K562 (cell line): ENCODE measurements at regions of chr2 and their contacts with region 1.

Region 1: GRCh38 chr2:75640621-75641121 is 5.9 kb upstream of the MRPL19 start:
- DNase-seq: peak; percentile 65 to 69 (median 66)
- ATAC-seq: peak; percentile 99
- H3K4me3 ChIP-seq: no peak overlapping the region
- H3K27ac ChIP-seq: no peak overlapping the region
- H3K4me1 ChIP-seq: no peaks in the 10 kb centered on the region
- H3K27me3 ChIP-seq: peaks cover 2 to 5% of the 10 kb centered on the region in 2 experiments; a peak in 2 of 5 replicates
- CTCF ChIP-seq: peak; percentile 94 to 98 (median 97)
- EP300 ChIP-seq: no peak
- POLR2A ChIP-seq: no peak
- RAD21 ChIP-seq: peak; percentile 88 to 94

Region 2: GRCh38 chr2:75680402-75680801 is 39.7 kb after region 1 on chr2:
- CTCF ChIA-PET with region 1: interaction called, 14 read pairs
- POLR2A ChIA-PET with region 1: no interaction called
- in situ Hi-C with region 1: loop called (anchors 5 kb)
- intact Hi-C with region 1: loop called (anchors 1 kb)
- DNase-seq: no peak
- ATAC-seq: no peak
- H3K4me3 ChIP-seq: no peak overlapping the region
- H3K27ac ChIP-seq: no peak overlapping the region
- H3K4me1 ChIP-seq: peaks cover 6 to 15% of the 10 kb centered on the region in 2 experiments; a peak in 4 of 5 replicates
- H3K27me3 ChIP-seq: no peaks in the 10 kb centered on the region
- CTCF ChIP-seq: no peak
- EP300 ChIP-seq: no peak
- POLR2A ChIP-seq: no peak
- RAD21 ChIP-seq: no peak

Region 3: DNA sequence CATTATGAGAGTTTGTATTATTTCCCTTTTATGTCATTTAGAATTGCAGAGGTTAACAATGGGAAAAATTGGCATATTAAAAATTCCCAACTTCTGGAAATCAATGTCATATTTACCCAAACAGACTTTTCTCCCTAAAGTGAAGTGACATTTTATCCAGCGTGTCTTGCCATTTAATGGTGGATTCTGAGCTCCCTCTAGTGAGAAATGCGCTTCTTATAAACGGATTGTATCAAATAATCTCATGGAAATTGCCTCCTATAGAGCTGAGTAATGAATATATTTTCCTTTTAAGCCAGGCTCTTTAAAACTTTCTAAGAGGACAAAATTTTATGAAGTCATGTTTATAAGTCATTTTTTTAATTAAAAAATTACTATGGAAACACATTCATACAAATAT is 75.7 kb after region 1 on chr2:
- CTCF ChIA-PET with region 1: interaction called, 4 read pairs
- POLR2A ChIA-PET with region 1: no interaction called
- in situ Hi-C with region 1: no loop called
- intact Hi-C with region 1: loop called (anchors 1 kb)
- DNase-seq: peak in 1 of 4 experiments; percentile 6
- ATAC-seq: 0 out of 3 replicates have a peak, but pooled peaks have one; percentile 46
- H3K4me3 ChIP-seq: no peak overlapping the region
- H3K27ac ChIP-seq: no peak overlapping the region
- H3K4me1 ChIP-seq: peaks cover 0 to 8% of the 10 kb centered on the region in 2 experiments; a peak in 1 of 5 replicates
- H3K27me3 ChIP-seq: peaks cover 0 to 6% of the 10 kb centered on the region in 2 experiments; a peak in 4 of 5 replicates
- CTCF ChIP-seq: peak in 1 of 3 experiments; percentile 48; a peak in 2 of 6 replicates
- EP300 ChIP-seq: no peak
- POLR2A ChIP-seq: no peak
- RAD21 ChIP-seq: peak; percentile 4 to 35; a peak in 2 of 4 replicates